T-cell (primary cell): ENCODE measurements at regions of chrX and their contacts with region 1.

Region 1: GRCh38 chrX:154478728-154479622 is at the start of gene LAGE3:
- DNase-seq: peak; percentile 76 to 96 (median 88)
- ATAC-seq: peak; percentile 90 to 93 (median 92)
- H3K4me3 ChIP-seq: peak within 1 kb of the TSS; percentile 34 to 62
- H3K4me3 Mint-ChIP-seq: peak within 1 kb of the TSS; percentile 77 to 80 (median 78)
- H3K27ac ChIP-seq: peak within 1 kb of the TSS; percentile 79
- H3K27ac Mint-ChIP-seq: peak within 1 kb of the TSS; percentile 86 to 89
- H3K4me1 ChIP-seq: peaks cover 5 to 37% of the 10 kb centered on the region in 2 experiments
- H3K4me1 Mint-ChIP-seq: peaks cover 19 to 35% (median 25%) of the 10 kb centered on the region in 3 donors
- H3K27me3 ChIP-seq: no peaks in the 10 kb centered on the region
- H3K27me3 Mint-ChIP-seq: peaks cover 0 to 8% of the 10 kb centered on the region in 2 donors
- total RNA-seq, gene LAGE3: 12.7 to 25.4 (median 23.5) TPM

Region 2: DNA sequence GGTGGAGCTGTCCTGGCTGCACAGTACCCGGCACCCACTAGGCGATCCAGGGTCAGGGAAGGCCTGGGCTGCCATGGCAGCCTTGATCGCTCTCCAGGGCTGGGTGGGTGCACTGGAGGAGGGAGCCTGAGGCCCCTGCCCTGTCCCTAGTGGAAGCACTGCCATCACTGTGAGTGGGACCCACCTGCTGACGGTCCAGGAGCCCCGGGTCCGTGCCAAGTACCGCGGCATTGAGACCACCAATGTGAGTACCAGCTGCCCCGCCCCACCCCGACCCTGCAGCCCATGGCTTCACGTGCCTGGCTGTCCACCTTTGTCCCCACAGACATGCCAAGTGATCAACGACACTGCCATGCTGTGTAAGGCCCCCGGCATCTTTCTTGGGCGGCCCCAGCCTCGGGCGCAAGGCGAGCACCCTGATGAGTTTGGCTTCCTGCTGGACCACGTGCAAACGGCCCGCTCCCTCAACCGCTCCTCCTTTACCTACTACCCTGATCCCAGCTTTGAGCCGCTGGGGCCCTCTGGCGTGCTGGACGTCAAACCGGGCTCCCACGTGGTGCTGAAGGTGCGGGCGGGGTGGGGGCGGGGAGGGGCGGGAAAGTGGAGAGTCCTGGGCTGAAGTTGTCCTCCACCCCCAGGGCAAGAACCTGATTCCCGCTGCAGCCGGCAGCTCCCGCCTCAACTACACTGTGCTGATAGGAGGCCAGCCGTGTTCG is 11.9 kb before region 1 on chrX:
- CTCF ChIA-PET with region 1: no interaction called
- POLR2A ChIA-PET with region 1: no interaction called
- DNase-seq: no peak
- ATAC-seq: no peak
- H3K4me3 ChIP-seq: no peak overlapping the region
- H3K4me3 Mint-ChIP-seq: no peak overlapping the region
- H3K27ac ChIP-seq: no peak overlapping the region
- H3K27ac Mint-ChIP-seq: no peak overlapping the region
- H3K4me1 ChIP-seq: no peaks in the 10 kb centered on the region
- H3K4me1 Mint-ChIP-seq: peaks cover 0 to under 1% (median 0%) of the 10 kb centered on the region in 3 donors
- H3K27me3 ChIP-seq: no peaks in the 10 kb centered on the region
- H3K27me3 Mint-ChIP-seq: no peaks in the 10 kb centered on the region

Region 3: GRCh38 chrX:154490414-154491083 is 11.6 kb after region 1 on chrX and contains the start of gene SLC10A3:
- CTCF ChIA-PET with region 1: no interaction called
- POLR2A ChIA-PET with region 1: interaction called in 1 of 2 experiments, 12 read pairs
- DNase-seq: peak; percentile 67 to 91 (median 76)
- ATAC-seq: peak; percentile 77 to 88 (median 82)
- H3K4me3 ChIP-seq: peak within 1 kb of the TSS; percentile 52 to 68
- H3K4me3 Mint-ChIP-seq: peak within 1 kb of the TSS; percentile 85 to 87 (median 86)
- H3K27ac ChIP-seq: peak within 1 kb of the TSS; percentile 87
- H3K27ac Mint-ChIP-seq: peak within 1 kb of the TSS; percentile 92
- H3K4me1 ChIP-seq: peaks cover 0 to 42% of the 10 kb centered on the region in 2 experiments
- H3K4me1 Mint-ChIP-seq: peaks cover 15 to 25% (median 20%) of the 10 kb centered on the region in 3 donors
- H3K27me3 ChIP-seq: no peaks in the 10 kb centered on the region
- H3K27me3 Mint-ChIP-seq: peaks cover 0 to 4% of the 10 kb centered on the region in 2 donors
- total RNA-seq, gene SLC10A3: 15.6 to 31.3 (median 25.9) TPM

Region 4: DNA sequence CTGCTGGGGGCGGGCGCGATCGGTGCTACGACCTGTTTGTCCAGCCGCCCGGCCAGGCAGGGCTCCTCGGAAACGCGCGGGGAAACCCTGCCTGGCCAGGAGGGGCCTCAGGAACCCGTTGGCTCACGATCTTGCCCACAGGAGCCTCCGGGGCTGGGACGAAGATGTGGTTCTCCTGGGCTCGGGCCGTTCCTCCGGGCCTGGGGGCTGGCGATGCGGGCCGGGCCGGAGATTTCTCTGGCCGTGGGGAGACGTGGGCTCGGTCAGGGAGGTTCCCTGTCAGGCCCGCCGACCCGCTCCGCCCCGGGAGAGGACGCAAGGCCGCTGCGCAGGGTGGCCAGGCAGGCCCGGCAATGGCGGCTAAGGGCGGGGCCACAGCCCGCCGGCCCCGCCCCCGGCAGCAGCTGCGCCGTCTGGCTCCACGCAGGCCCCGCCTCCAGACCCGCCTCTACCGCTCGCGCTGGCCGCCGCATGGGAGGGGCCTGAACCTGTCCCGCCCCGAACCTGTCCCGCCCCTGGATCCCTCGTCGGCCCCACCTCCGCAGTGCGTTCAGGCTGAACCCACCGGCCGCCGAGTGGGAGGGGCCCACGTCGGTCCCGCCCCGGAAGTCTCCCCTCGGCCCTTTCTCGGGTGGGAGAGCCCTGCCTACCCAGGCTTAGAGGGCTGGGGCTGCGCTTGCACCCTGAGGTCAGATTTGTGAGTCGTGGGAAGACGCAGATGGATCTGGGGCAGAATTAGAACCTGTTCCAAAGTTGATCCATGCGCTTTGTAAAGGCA is 37.1 kb after region 1 on chrX and contains the start of gene FAM3A:
- CTCF ChIA-PET with region 1: no interaction called
- POLR2A ChIA-PET with region 1: no interaction called
- DNase-seq: peak; percentile 81 to 94 (median 89)
- ATAC-seq: peak; percentile 94 to 99 (median 94)
- H3K4me3 ChIP-seq: peak within 1 kb of the TSS; percentile 58 to 82
- H3K4me3 Mint-ChIP-seq: peak within 1 kb of the TSS; percentile 77 to 84 (median 82)
- H3K27ac ChIP-seq: peak within 1 kb of the TSS; percentile 68
- H3K27ac Mint-ChIP-seq: peak within 1 kb of the TSS; percentile 91 to 92
- H3K4me1 ChIP-seq: peaks cover 0 to 42% of the 10 kb centered on the region in 2 experiments
- H3K4me1 Mint-ChIP-seq: peaks cover 28 to 31% (median 30%) of the 10 kb centered on the region in 3 donors
- H3K27me3 ChIP-seq: no peaks in the 10 kb centered on the region
- H3K27me3 Mint-ChIP-seq: peaks cover 0 to 9% of the 10 kb centered on the region in 2 donors
- total RNA-seq, gene FAM3A: 33.9 to 67.6 (median 57.8) TPM